ENCODE measurements at regions of chr19 and their contacts with region 1.

Region 1: DNA sequence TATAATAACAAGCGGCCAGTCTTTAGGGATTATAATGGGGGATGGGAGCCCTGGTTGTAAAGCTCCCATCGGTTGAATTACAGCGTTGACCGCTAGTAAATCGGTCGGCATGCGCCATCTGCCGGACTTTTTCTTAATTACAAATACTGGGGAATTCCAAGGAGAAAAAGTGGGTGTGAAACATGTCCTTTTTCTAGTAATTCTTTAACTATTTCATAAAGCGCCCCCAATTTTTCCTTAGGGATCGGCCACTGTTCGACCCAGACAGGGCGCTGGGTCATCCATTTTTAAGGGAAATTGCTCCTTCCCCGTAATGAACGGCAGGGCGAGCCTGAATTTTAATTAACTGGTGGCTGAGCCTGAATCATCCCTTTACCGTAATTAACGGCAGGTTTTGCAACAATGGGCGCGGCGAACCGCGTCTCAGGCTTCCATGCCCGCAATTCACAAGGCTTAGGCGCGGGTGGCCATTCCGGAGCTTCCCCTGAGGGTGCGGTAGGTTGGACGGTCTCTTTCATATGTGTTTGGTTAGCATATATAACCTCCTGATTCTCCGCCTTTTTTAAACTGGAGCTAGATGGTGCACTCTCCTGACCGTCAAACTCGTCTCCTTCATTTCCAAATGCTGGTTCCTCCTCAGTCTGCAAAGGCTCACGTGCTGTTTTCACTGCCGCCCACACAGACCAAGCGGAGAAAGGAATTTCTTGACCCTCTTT is 30.2 kb upstream of the EVI5L start:
- DNase-seq: peak; percentile 73
- H3K4me3 ChIP-seq: peak overlapping the region in 1 of 2 experiments; percentile 54; a peak in 2 of 4 replicates
- H3K27ac ChIP-seq: no peak overlapping the region
- H3K4me1 ChIP-seq: no peaks in the 10 kb centered on the region
- H3K27me3 ChIP-seq: peaks cover 43% of the 10 kb centered on the region
- CTCF ChIP-seq: peak; percentile 65
- EP300 ChIP-seq: no peak
- RAD21 ChIP-seq: peak; percentile 80

Region 2: DNA sequence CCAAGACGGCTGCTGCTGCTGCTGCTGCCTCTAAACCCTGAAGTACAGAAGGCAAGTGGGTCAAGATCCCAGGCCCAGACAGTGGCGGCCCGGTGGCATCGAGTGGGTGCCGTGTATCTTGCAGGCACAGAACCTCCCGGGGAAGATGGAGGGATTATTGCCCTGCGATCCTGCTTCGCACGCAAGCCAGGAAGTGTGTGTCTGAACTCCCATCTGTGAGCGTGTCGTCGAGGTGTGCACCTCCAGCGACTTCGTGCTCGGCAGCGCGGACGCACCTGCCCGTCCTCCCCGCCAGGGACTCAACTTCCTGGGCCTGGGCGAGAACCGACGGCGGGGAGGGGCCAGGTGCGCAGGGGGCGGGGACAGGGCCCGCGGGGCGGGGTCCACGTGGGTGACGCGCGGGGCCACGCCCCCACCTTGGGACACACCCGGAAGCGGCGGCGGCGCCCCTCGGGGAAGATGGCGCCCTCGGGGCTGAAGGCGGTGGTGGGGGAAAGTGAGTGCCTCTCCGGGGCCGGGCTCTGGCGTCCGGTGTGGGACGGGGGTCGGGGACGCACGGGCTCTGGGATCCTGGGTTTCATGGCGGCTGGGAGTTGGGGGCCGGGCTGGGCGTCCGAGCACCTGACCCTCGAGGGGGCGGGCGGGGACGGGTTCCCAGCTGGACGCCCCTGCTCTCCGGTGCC is 163.0 kb before region 1 on chr19 and contains the start of gene STXBP2:
- CTCF ChIA-PET with region 1: interaction called, 10 read pairs
- POLR2A ChIA-PET with region 1: no interaction called
- DNase-seq: peak; percentile 73
- H3K4me3 ChIP-seq: peak within 1 kb of the TSS in 1 of 2 experiments; percentile 21; a peak in 1 of 4 replicates
- H3K27ac ChIP-seq: no peak within 1 kb of the TSS
- H3K4me1 ChIP-seq: peaks cover 0 to 4% of the 10 kb centered on the region in 2 experiments; a peak in 1 of 4 replicates
- H3K27me3 ChIP-seq: peaks cover 37% of the 10 kb centered on the region
- CTCF ChIP-seq: no peak
- EP300 ChIP-seq: no peak
- RAD21 ChIP-seq: no peak
- polyA plus RNA-seq, gene STXBP2: 1.3 and 4.7 TPM in 2 replicates

Region 3: DNA sequence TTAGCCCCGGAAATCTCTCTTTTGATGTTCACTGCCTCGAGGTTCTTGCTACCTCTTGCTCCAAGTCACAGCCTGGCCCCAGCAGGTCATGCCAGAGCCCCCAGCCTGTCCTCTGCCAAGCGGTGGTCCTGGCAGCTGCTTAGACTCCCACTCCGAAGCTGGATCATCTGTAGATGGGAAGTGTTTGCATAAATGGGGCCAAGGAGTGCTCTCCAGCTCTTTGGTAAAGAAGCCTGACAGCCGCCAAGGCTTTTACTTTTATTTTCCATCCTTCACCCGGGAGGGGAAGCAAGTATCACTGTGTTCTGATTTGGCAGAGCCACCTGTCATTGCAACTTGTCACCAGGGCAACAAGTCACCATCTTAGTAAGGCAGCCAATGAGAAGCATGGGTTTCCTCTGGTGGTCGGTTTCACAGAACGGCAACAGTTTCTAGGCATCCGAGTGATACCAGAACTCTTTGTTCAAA is 141.5 kb before region 1 on chr19:
- CTCF ChIA-PET with region 1: interaction called, 25 read pairs
- POLR2A ChIA-PET with region 1: no interaction called
- DNase-seq: no peak
- H3K4me3 ChIP-seq: no peak overlapping the region
- H3K27ac ChIP-seq: no peak overlapping the region
- H3K4me1 ChIP-seq: no peaks in the 10 kb centered on the region
- H3K27me3 ChIP-seq: peaks cover 27% of the 10 kb centered on the region
- CTCF ChIP-seq: no peak
- EP300 ChIP-seq: no peak
- RAD21 ChIP-seq: no peak

Region 4: GRCh38 chr19:7680606-7681339 is 119.0 kb before region 1 on chr19 and contains the start of gene TRAPPC5:
- CTCF ChIA-PET with region 1: interaction called, 35 read pairs
- POLR2A ChIA-PET with region 1: no interaction called
- DNase-seq: peak; percentile 98
- H3K4me3 ChIP-seq: peak within 1 kb of the TSS; percentile 87 to 92
- H3K27ac ChIP-seq: peak within 1 kb of the TSS in 1 of 2 experiments; percentile 72; a peak in 1 of 4 replicates
- H3K4me1 ChIP-seq: peaks cover 0 to 13% of the 10 kb centered on the region in 2 experiments; a peak in 1 of 4 replicates
- H3K27me3 ChIP-seq: peaks cover 28% of the 10 kb centered on the region
- CTCF ChIP-seq: peak; percentile 87
- EP300 ChIP-seq: no peak
- RAD21 ChIP-seq: peak; percentile 82
- polyA plus RNA-seq, gene TRAPPC5: 44.1 and 49.4 TPM in 2 replicates

Region 5: GRCh38 chr19:7771072-7771471 is 28.7 kb before region 1 on chr19:
- CTCF ChIA-PET with region 1: interaction called, 12 read pairs
- POLR2A ChIA-PET with region 1: no interaction called
- DNase-seq: no peak
- H3K4me3 ChIP-seq: no peak overlapping the region
- H3K27ac ChIP-seq: no peak overlapping the region
- H3K4me1 ChIP-seq: no peaks in the 10 kb centered on the region
- H3K27me3 ChIP-seq: peaks cover 87% of the 10 kb centered on the region
- CTCF ChIP-seq: no peak
- EP300 ChIP-seq: no peak
- RAD21 ChIP-seq: no peak

Region 6: DNA sequence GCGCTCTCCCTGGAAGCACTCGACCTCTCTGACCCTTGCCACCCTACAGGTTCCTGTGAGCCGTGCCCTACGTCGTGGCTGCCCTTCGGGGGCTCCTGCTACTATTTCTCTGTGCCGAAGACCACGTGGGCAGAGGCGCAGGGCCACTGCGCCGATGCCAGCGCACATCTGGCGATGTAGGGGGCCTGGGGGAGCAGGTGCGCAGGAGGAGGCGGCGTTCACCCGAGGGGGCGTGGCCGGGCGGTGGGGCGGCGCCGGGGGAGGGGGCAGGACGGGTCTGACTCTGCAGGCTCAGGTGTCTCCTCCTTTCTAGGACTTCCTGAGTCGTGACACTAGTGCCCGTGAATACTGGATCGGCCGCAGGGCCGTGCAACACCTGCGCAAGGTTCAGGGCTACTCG is 10.4 kb before region 1 on chr19:
- CTCF ChIA-PET with region 1: interaction called, 28 read pairs
- POLR2A ChIA-PET with region 1: no interaction called
- DNase-seq: peak; percentile 17
- H3K4me3 ChIP-seq: no peak overlapping the region
- H3K27ac ChIP-seq: no peak overlapping the region
- H3K4me1 ChIP-seq: no peaks in the 10 kb centered on the region
- H3K27me3 ChIP-seq: peaks cover 50% of the 10 kb centered on the region
- CTCF ChIP-seq: no peak
- EP300 ChIP-seq: no peak
- RAD21 ChIP-seq: no peak